ENCODE measurements at regions of chr21 and their contacts with region 1.

Region 1: GRCh38 chr21:43300858-43301620 is 125.9 kb downstream of the SIK1 start:
- DNase-seq: no peak
- ATAC-seq: peak; percentile 55
- H3K4me3 ChIP-seq: no peak overlapping the region; a peak in 1 of 6 replicates
- H3K27ac ChIP-seq: no peak overlapping the region
- H3K4me1 ChIP-seq: peaks cover 96% of the 10 kb centered on the region
- H3K27me3 ChIP-seq: peaks cover 2 to 26% of the 10 kb centered on the region in 2 experiments; a peak in 4 of 5 replicates
- CTCF ChIP-seq: no peak
- EP300 ChIP-seq: no peak
- POLR2A ChIP-seq: no peak
- RAD21 ChIP-seq: no peak

Region 2: GRCh38 chr21:43312751-43313169 is 11.7 kb after region 1 on chr21:
- CTCF ChIA-PET with region 1: no interaction called
- POLR2A ChIA-PET with region 1: interaction called, 39 read pairs
- in situ Hi-C with region 1: no loop called
- intact Hi-C with region 1: no loop called
- DNase-seq: peak; percentile 44
- ATAC-seq: peak; percentile 27
- H3K4me3 ChIP-seq: peak overlapping the region in 2 of 3 experiments; percentile 6 to 48; a peak in 2 of 6 replicates
- H3K27ac ChIP-seq: no peak overlapping the region
- H3K4me1 ChIP-seq: peaks cover 41% of the 10 kb centered on the region
- H3K27me3 ChIP-seq: no peaks in the 10 kb centered on the region
- CTCF ChIP-seq: 0 out of 2 replicates have a peak, but pooled peaks have one; percentile 12
- EP300 ChIP-seq: no peak
- POLR2A ChIP-seq: no peak
- RAD21 ChIP-seq: no peak

Region 3: DNA sequence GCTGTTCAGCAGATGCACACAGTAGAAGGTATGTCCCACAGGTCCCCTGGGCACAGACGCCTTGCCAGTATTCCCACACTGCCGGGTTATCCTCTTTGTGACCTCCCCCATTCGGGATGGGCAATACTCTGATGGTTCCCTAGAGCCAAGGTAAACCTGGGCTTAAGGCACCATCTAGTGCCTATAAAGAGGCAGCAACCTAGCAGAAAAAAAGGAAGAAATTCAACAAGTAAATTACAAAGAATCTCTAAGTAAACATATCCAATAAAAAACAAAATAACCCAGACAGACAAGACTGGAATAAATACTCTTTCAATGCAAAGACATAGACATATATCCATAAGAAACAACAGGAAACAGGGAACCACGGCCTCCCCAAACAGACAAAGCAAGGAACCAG is 318.8 kb after region 1 on chr21:
- CTCF ChIA-PET with region 1: no interaction called
- POLR2A ChIA-PET with region 1: no interaction called
- in situ Hi-C with region 1: no loop called
- intact Hi-C with region 1: no loop called
- DNase-seq: no peak
- ATAC-seq: no peak
- H3K4me3 ChIP-seq: no peak overlapping the region
- H3K27ac ChIP-seq: no peak overlapping the region
- H3K4me1 ChIP-seq: no peaks in the 10 kb centered on the region
- H3K27me3 ChIP-seq: no peaks in the 10 kb centered on the region
- CTCF ChIP-seq: peak; percentile 47
- EP300 ChIP-seq: no peak
- POLR2A ChIP-seq: no peak
- RAD21 ChIP-seq: no peak

Region 4: DNA sequence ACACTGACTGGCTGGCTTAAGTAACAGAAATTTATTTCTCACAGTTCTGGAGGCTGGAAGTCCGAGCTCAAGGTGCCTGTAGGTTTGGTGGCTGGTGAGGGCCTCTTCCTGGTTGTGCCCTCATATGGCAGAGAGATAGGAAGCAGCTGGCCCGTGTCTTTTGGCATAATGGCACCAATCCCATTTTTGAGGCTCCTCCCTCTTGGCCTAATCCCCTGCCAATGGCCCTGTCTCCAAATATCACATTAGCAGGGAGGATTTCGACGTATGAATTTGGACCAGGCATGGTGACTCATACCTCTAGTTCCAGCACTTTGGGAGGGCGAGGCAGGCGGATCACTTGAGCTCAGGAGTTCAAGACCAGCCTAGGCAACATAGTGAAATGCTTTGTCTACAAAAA is 601.4 kb after region 1 on chr21:
- CTCF ChIA-PET with region 1: no interaction called
- POLR2A ChIA-PET with region 1: no interaction called
- in situ Hi-C with region 1: no loop called
- intact Hi-C with region 1: no loop called
- DNase-seq: no peak
- ATAC-seq: no peak
- H3K4me3 ChIP-seq: no peak overlapping the region
- H3K27ac ChIP-seq: no peak overlapping the region
- H3K4me1 ChIP-seq: no peaks in the 10 kb centered on the region
- H3K27me3 ChIP-seq: no peaks in the 10 kb centered on the region
- CTCF ChIP-seq: no peak
- EP300 ChIP-seq: no peak
- POLR2A ChIP-seq: no peak
- RAD21 ChIP-seq: no peak